Activated naive CD4-positive, alpha-beta T cell treated with anti-CD3 and anti-CD28 coated beads for 36 hours (primary cell): ENCODE measurements at regions of chr9 and their contacts with region 1.

Region 1: DNA sequence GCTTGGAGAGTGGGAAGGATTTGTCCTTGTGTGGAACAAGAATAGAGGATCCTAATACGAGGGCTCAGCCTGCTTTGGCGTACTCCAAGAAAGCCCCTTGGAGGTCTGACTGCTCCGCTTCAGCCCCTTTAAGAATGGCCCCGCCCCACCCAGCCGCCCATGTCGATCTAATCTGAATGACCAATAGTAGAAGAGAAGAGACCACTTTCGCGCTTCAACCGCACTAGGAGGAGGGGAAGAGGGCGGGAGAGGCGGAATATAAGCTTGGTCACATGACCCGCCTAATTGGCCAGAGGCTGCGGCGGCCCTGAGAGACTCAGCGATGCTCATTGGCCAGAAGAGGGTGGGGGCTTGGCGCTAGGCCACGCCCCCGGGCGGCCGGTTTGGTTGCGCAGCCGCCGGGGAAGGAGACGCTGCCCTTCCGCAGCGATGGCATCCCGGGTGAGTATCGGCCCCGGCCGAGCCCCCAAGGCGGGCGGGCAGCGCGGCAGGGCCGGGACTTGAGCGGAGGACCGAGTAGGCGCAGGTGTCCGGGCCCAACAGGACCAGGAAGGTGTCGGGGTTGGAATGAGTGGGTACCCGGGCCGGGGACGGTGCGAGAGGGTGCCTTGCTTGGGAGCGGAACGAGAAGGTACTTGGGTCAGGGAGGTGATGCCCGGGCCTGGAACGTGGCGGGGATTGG is at the start of gene MIGA2:
- DNase-seq: peak; percentile 97
- H3K4me3 Mint-ChIP-seq: peak within 1 kb of the TSS; percentile 98
- H3K27ac Mint-ChIP-seq: peak within 1 kb of the TSS; percentile 71
- H3K4me1 Mint-ChIP-seq: peaks cover 30% of the 10 kb centered on the region
- H3K27me3 Mint-ChIP-seq: no peaks in the 10 kb centered on the region
- total RNA-seq, gene MIGA2: 36.3 to 42.7 TPM

Region 2: DNA sequence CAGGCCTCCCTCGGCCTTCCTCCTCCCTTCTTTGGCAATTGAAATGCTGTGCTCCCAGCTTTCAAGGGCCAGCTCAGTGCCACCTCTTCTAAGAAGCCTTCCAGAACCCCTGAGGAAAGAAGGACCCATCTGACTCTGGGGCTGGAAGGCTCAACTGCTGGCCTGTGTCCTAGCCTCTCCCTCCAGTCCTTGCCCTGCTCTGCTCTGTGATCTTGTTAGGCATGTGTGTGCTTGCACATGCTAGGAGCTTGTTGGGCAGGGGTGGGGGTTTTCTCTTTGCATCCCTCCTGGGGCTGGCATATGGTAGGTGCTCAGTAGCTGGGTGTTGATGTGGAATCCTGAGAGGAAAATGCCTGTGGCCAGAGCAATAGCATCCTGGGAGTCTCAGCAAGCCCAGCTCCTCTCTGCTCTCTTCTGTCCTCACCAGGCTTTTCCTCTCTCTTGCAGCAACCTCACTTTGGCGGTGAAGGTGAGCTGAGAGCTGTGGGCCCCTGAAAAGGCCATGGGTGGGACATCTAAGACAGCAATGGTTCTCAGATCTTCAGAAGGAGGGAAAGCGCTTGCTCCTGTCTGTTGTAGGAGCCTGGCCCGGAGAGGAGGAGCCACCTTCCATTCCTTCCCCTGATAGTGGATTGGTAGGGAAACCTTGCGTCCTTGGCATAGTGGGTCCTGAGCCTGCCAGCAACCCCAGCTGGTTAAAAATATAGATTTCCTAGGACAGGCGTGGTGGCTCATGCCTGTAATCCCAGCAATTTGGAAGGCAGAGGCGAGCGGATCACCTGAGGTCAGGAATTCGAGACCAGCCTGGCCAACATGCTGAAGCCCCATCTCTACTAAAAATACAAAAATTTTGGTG is 98.8 kb before region 1 on chr9:
- CTCF ChIA-PET with region 1: no interaction called
- intact Hi-C with region 1: no loop called
- DNase-seq: no peak
- H3K4me3 Mint-ChIP-seq: no peak overlapping the region
- H3K27ac Mint-ChIP-seq: no peak overlapping the region
- H3K4me1 Mint-ChIP-seq: no peaks in the 10 kb centered on the region
- H3K27me3 Mint-ChIP-seq: no peaks in the 10 kb centered on the region

Region 3: DNA sequence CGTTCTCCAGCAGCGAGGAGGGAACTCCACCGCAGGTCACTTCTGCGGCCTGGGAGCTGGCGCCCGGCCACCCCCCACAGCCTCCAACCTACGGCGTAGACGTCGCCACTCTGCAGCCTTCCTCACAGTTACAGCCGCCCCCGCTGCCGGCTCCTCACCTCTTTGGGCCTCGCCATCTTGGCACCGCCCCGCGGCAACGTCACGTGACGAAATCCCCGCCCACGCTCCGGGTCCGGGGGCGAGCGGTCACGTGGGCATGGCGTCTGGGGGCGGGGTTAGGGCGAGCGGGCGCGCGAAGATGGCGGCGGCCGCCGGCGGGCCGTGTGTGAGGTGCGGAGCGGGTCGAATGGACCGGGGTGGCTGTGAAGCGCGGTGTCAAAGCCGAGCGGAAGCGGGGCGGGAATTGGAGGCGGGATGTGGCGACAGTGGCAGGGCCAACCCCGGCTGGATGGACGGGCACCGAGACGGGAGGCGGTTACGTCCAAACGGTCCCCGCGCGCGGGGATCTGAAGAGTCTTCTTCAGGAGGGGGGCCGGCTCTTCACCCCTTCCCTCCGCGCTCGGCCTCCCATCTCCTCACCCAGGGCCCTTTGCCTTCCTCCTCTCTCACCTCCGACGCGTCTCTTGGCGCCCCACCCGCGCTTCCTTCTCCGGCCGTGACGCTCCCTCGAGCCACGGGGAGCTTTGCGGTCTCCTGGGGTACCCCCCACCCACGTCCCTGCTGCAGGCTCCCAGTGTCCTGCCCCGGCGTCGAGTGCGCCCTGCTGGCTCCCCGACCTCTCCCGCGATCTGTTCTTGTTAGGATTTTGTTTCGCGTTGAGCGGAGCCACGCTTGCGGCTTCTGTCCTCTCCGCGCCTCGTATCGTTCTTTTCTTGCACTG is 88.7 kb before region 1 on chr9 and contains the starts of genes DOLK and NUP188:
- CTCF ChIA-PET with region 1: interaction called, 3 read pairs
- intact Hi-C with region 1: loop called (anchors 5 kb)
- DNase-seq: peak; percentile 98
- H3K4me3 Mint-ChIP-seq: peak within 1 kb of the TSS; percentile 97
- H3K27ac Mint-ChIP-seq: peak within 1 kb of the TSS; percentile 94
- H3K4me1 Mint-ChIP-seq: peaks cover 33% of the 10 kb centered on the region
- H3K27me3 Mint-ChIP-seq: no peaks in the 10 kb centered on the region
- total RNA-seq, gene DOLK: 2.5 to 2.7 TPM
- total RNA-seq, gene NUP188: 101 to 112 TPM

Region 4: DNA sequence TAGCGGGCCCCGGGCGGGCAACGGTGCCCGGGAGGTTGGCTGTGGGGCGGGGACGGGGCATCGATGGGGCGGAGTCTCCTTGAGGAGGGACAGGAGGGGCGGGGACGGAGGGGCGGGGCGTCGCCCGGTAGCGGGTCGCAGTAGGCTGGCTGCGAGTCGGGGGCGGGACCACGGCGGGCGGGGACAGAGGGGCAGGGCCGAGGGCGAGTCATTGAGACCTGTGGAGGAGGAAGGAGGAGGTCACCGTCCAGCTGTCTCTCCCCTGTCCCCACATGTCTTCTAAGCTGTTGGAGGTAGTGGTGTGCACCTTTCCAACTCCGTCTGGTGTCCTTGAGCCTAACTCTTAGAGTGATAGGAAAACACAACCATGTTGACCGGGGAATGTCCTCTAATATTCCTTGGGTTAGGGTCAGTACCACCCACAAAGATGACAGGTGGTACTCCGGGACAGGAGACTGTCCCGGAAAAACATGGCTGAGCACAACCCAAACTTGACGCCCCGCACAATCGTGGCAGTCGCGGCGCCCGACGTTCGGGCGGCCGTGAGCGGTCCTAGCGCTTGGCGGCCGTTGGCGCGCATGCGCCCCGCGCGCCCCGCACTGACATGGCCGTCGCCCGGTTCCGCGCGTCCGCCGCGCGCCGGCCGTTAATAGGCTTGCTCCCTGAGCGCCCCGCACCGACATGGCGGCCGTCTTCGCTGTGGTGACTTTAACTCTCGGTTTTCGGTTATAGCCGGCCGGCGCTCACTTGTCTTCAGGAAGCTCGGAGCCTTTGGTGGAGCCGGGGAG is 74.6 kb after region 1 on chr9 and contains the starts of genes CRAT and PTPA:
- CTCF ChIA-PET with region 1: no interaction called
- intact Hi-C with region 1: loop called (anchors 1 kb)
- DNase-seq: peak; percentile 99
- H3K4me3 Mint-ChIP-seq: peak within 1 kb of the TSS; percentile 87
- H3K27ac Mint-ChIP-seq: peak within 1 kb of the TSS; percentile 93
- H3K4me1 Mint-ChIP-seq: peaks cover 38% of the 10 kb centered on the region
- H3K27me3 Mint-ChIP-seq: no peaks in the 10 kb centered on the region
- total RNA-seq, gene CRAT: 15.0 to 15.8 TPM
- total RNA-seq, gene PTPA: 83.0 to 94.5 TPM